CD4-positive, alpha-beta memory T cell (primary cell): ENCODE measurements at regions of chr15 and their contacts with region 1.

Region 1: GRCh38 chr15:52078876-52079700 is 33.5 kb downstream of the BCL2L10 start:
- DNase-seq: peak; percentile 72 to 80 (median 73)
- H3K4me3 ChIP-seq: no peak overlapping the region
- H3K4me3 Mint-ChIP-seq: peak overlapping the region in 1 of 8 donors; percentile 0
- H3K27ac ChIP-seq: no peak overlapping the region
- H3K27ac Mint-ChIP-seq: peak overlapping the region in 1 of 7 donors; percentile 31
- H3K4me1 ChIP-seq: no peaks in the 10 kb centered on the region
- H3K4me1 Mint-ChIP-seq: peaks cover 2 to 15% (median 6%) of the 10 kb centered on the region in 4 donors
- H3K27me3 ChIP-seq: no peaks in the 10 kb centered on the region
- H3K27me3 Mint-ChIP-seq: no peaks in the 10 kb centered on the region

Region 2: DNA sequence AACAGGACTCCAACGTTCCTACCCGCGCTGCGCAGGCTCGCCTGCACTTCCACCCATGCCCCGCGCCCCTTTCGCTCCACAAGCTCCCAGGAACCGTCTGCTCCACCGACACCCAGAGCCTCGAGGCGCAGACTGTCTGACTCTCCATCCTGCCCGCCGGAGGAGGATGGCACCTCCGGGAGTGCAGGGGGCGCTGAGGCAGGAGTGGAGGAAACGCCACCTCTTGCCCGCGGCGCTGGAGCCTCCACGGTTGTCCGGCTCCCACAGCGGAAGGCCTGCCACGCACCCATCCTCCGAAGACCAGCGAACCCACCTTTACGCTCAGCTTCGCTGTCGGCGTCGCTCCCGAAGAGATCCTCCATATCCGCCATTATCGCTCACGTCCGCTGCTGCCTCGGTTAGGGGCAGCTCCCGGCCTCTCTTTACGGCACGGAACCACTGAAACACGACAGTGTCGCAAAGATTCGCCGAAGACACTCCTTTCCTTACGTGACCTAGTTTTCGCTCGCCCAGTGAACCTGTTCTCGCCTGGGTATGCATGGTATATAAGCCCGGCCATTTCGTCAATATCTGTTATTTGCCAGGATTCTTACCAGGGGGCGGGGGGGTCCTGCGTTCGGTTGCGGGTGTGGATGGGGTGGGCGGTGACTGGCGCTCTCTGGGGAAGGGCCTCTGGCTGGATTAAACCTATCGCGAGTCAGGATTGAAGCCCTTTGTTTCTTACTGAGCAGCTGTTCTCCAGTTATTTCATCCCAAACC is 107.5 kb before region 1 on chr15 and contains the start of gene LEO1:
- CTCF ChIA-PET with region 1: interaction called, 101 read pairs
- POLR2A ChIA-PET with region 1: interaction called, 16 read pairs
- intact Hi-C with region 1: no loop called
- DNase-seq: peak; percentile 92 to 95 (median 93)
- H3K4me3 ChIP-seq: peak within 1 kb of the TSS; percentile 93 to 96
- H3K4me3 Mint-ChIP-seq: peak within 1 kb of the TSS; percentile 95 to 100 (median 98)
- H3K27ac ChIP-seq: peak within 1 kb of the TSS; percentile 77
- H3K27ac Mint-ChIP-seq: peak within 1 kb of the TSS; percentile 94 to 99 (median 97)
- H3K4me1 ChIP-seq: peaks cover 18% of the 10 kb centered on the region
- H3K4me1 Mint-ChIP-seq: peaks cover 15 to 23% (median 19%) of the 10 kb centered on the region in 4 donors
- H3K27me3 ChIP-seq: no peaks in the 10 kb centered on the region
- H3K27me3 Mint-ChIP-seq: peaks cover 0 to 1% of the 10 kb centered on the region in 2 donors
- total RNA-seq, gene LEO1: 21.7 to 22.2 TPM

Region 3: DNA sequence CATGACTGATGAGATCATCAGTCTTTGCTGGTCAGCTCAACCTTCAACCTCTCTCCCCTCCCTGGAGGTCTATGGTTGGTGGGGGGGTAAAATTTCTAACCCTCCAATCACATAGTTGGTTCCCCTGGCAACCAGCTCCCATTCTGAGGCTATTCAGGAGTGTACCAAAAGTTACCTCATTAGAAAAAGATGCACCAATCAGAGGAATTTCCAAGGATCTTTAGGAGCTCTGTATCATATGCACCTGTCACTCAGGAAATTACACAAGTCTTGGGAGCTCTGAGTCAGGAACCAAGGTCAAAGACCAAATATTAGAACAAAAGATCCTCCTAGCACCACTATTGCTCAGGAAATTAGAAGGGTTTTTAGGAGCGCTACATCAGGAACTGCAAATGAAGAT is 86.1 kb before region 1 on chr15:
- CTCF ChIA-PET with region 1: interaction called, 11 read pairs
- POLR2A ChIA-PET with region 1: no interaction called
- intact Hi-C with region 1: no loop called
- DNase-seq: no peak
- H3K4me3 ChIP-seq: no peak overlapping the region
- H3K4me3 Mint-ChIP-seq: no peak overlapping the region
- H3K27ac ChIP-seq: no peak overlapping the region
- H3K27ac Mint-ChIP-seq: no peak overlapping the region
- H3K4me1 ChIP-seq: no peaks in the 10 kb centered on the region
- H3K4me1 Mint-ChIP-seq: no peaks in the 10 kb centered on the region
- H3K27me3 ChIP-seq: no peaks in the 10 kb centered on the region
- H3K27me3 Mint-ChIP-seq: no peaks in the 10 kb centered on the region

Region 4: GRCh38 chr15:52039925-52040781 is 38.9 kb before region 1 on chr15:
- CTCF ChIA-PET with region 1: interaction called, 48 read pairs
- POLR2A ChIA-PET with region 1: no interaction called
- intact Hi-C with region 1: no loop called
- DNase-seq: no peak
- H3K4me3 ChIP-seq: no peak overlapping the region
- H3K4me3 Mint-ChIP-seq: peak overlapping the region in 3 of 8 donors; percentile 5 to 33 (median 9)
- H3K27ac ChIP-seq: no peak overlapping the region
- H3K27ac Mint-ChIP-seq: peak overlapping the region; percentile 13 to 86 (median 77)
- H3K4me1 ChIP-seq: peaks cover 48% of the 10 kb centered on the region
- H3K4me1 Mint-ChIP-seq: peaks cover 44 to 67% (median 55%) of the 10 kb centered on the region in 4 donors
- H3K27me3 ChIP-seq: no peaks in the 10 kb centered on the region
- H3K27me3 Mint-ChIP-seq: no peaks in the 10 kb centered on the region

Region 5: GRCh38 chr15:52124270-52124880 is 45.3 kb after region 1 on chr15:
- CTCF ChIA-PET with region 1: no interaction called
- POLR2A ChIA-PET with region 1: no interaction called
- intact Hi-C with region 1: no loop called
- DNase-seq: no peak
- H3K4me3 ChIP-seq: no peak overlapping the region
- H3K4me3 Mint-ChIP-seq: no peak overlapping the region
- H3K27ac ChIP-seq: no peak overlapping the region
- H3K27ac Mint-ChIP-seq: peak overlapping the region in 2 of 7 donors; percentile 2 to 19
- H3K4me1 ChIP-seq: no peaks in the 10 kb centered on the region
- H3K4me1 Mint-ChIP-seq: no peaks in the 10 kb centered on the region
- H3K27me3 ChIP-seq: no peaks in the 10 kb centered on the region
- H3K27me3 Mint-ChIP-seq: no peaks in the 10 kb centered on the region

Region 6: GRCh38 chr15:52139599-52140491 is 60.8 kb after region 1 on chr15:
- CTCF ChIA-PET with region 1: interaction called, 11 read pairs
- POLR2A ChIA-PET with region 1: no interaction called
- intact Hi-C with region 1: no loop called
- DNase-seq: peak; percentile 42 to 60 (median 46)
- H3K4me3 ChIP-seq: no peak overlapping the region
- H3K4me3 Mint-ChIP-seq: peak overlapping the region in 1 of 8 donors; percentile 26
- H3K27ac ChIP-seq: no peak overlapping the region
- H3K27ac Mint-ChIP-seq: peak overlapping the region in 4 of 7 donors; percentile 61 to 70 (median 66)
- H3K4me1 ChIP-seq: peaks cover 22% of the 10 kb centered on the region
- H3K4me1 Mint-ChIP-seq: peaks cover 18 to 32% (median 27%) of the 10 kb centered on the region in 4 donors
- H3K27me3 ChIP-seq: no peaks in the 10 kb centered on the region
- H3K27me3 Mint-ChIP-seq: no peaks in the 10 kb centered on the region

Region 7: GRCh38 chr15:52227456-52227855 is 148.4 kb after region 1 on chr15:
- CTCF ChIA-PET with region 1: interaction called, 12 read pairs
- POLR2A ChIA-PET with region 1: no interaction called
- intact Hi-C with region 1: loop called (anchors 1 kb)
- DNase-seq: peak; percentile 68 to 78 (median 69)
- H3K4me3 ChIP-seq: no peak overlapping the region
- H3K4me3 Mint-ChIP-seq: no peak overlapping the region
- H3K27ac ChIP-seq: no peak overlapping the region
- H3K27ac Mint-ChIP-seq: peak overlapping the region in 1 of 7 donors; percentile 60
- H3K4me1 ChIP-seq: peaks cover 8% of the 10 kb centered on the region
- H3K4me1 Mint-ChIP-seq: peaks cover 10 to 21% (median 14%) of the 10 kb centered on the region in 4 donors
- H3K27me3 ChIP-seq: no peaks in the 10 kb centered on the region
- H3K27me3 Mint-ChIP-seq: no peaks in the 10 kb centered on the region